Activated CD8-positive, alpha-beta T cell treated with anti-CD3 and anti-CD28 coated beads for 36 hours (primary cell): ENCODE measurements at regions of chr22 and their contacts with region 1.

Region 1: DNA sequence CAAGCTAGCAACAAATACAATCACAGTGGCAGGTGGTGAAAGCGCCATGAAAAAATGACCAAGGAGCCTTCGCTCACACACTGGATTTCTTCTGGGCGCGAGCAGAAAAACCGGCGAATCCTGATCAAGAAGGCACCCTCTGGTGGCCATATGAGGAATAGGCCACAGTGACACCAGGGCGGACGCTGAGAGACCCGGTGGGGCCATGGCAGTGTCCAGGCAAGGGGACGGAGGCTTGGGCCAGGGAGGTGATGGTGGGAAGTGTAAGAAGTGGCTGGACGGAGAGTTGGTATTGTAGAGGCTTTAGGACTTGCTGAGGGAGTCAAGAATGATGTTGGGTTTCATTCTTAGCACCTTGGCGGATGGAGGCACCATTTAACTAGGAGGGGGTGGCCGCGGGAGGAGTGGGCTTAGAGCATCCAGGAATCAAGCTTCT is 16.9 kb upstream of the RAC2 start:
- DNase-seq: peak; percentile 77
- ATAC-seq: peak; percentile 86
- H3K4me3 Mint-ChIP-seq: no peak overlapping the region
- H3K27ac Mint-ChIP-seq: peak overlapping the region; percentile 58
- H3K4me1 Mint-ChIP-seq: peaks cover 28% of the 10 kb centered on the region
- H3K27me3 Mint-ChIP-seq: no peaks in the 10 kb centered on the region
- CTCF ChIP-seq: peak; percentile 97

Region 2: DNA sequence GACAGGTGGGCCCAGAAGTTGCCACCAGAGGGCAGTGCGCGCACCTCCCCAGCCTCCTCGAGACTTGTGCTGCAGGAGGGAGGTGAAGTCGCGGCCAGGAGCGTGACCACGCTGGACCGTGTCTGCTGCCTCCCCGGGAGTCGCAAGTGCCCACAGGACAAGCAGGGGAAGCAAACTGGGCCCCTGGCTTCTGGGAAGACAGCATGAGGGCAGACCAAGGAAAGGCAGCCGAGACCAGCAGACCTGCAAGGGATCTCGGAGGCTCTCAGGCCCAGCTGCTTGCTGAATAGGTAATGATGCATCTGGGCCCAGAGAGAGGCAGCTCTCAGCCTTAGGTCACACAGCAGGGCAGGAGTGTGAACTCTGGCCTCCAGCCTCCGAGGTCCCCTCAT is 94.2 kb before region 1 on chr22:
- CTCF ChIA-PET with region 1: interaction called, 14 read pairs
- POLR2A ChIA-PET with region 1: no interaction called
- intact Hi-C with region 1: no loop called
- DNase-seq: peak; percentile 93
- ATAC-seq: peak; percentile 18
- H3K4me3 Mint-ChIP-seq: peak overlapping the region; percentile 72
- H3K27ac Mint-ChIP-seq: peak overlapping the region; percentile 73
- H3K4me1 Mint-ChIP-seq: peaks cover 93% of the 10 kb centered on the region
- H3K27me3 Mint-ChIP-seq: no peaks in the 10 kb centered on the region
- CTCF ChIP-seq: peak; percentile 87

Region 3: DNA sequence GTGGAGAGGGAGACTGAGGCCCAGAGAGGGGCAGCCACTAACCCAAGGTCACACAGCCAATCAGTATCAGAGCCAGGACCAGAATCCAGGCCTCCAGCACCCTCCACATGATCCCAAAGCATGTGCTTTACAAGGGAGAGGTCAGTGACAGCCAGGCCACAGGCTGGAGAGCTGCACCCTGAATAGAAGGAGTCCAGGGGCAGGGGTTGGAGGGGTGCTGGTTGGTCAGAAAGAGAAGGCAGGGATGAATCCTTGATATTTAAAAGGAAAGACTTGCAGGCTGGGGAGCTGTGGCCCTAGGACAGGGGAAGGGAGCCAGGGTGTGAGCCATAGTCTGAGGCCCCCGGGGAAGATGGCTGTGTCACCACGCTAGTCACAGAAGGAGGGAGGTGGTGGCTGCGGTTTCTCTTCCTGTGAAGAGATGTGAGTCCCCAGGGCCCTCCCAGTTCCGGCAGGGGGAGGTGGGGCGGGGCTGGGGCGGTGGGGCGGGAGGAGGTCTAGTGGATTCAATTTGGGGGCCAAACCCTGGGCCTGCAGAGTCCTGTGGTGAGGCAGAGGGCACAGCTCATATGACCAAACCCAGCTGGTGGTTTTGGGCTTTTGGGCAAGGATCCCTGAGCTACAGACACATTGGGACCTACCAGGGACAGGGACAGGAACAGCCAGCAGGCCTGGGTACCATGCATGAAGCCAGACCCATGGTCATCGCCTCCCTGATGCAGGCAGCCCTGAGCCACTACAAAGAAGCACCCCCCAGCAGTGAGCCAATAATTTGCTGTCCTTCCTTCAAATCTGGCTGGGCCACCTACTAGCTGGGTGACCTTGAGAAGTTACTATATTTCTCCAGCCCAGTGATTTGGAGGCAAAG is 30.9 kb before region 1 on chr22:
- CTCF ChIA-PET with region 1: interaction called, 40 read pairs
- POLR2A ChIA-PET with region 1: interaction called, 9 read pairs
- intact Hi-C with region 1: no loop called
- DNase-seq: peak; percentile 98
- ATAC-seq: peak; percentile 61
- H3K4me3 Mint-ChIP-seq: peak overlapping the region; percentile 76
- H3K27ac Mint-ChIP-seq: peak overlapping the region; percentile 98
- H3K4me1 Mint-ChIP-seq: peaks cover 85% of the 10 kb centered on the region
- H3K27me3 Mint-ChIP-seq: no peaks in the 10 kb centered on the region
- CTCF ChIP-seq: no peak

Region 4: DNA sequence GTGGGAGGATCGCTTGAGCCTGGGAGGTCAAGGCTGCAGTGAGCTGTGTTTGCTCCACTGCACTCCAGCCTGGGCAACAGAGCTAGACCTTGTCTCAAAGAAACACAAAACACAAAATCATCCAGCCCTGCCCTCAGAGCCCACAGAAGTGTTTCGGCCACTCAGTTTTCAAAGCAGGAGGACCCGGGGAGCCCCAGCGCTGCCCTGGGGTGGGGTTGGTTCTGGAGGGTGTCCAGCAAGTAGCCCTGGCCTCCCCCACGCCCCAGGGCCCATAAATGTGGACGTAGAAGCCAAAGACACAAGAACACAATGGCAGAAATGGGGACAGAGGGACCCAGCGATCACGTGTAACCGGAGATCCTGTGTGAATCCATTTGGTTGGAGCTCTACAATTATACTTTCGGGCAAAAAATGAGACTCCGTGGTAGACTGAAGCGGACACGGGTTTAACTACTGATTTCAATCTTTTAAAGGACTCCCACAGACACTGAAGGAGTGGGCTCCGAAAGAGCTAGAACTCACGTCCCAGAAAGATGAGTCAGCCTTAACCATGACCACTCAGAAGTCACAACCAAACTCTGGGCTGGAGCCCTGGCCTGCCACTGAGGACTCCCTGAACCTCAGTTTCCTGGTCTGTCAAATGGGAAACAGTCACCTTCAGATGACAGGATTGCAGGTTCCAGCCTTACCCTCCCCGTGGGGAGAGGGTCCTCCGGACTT is 12.4 kb after region 1 on chr22:
- CTCF ChIA-PET with region 1: interaction called, 73 read pairs
- POLR2A ChIA-PET with region 1: no interaction called
- intact Hi-C with region 1: no loop called
- DNase-seq: peak; percentile 51
- ATAC-seq: peak; percentile 79
- H3K4me3 Mint-ChIP-seq: no peak overlapping the region
- H3K27ac Mint-ChIP-seq: peak overlapping the region; percentile 47
- H3K4me1 Mint-ChIP-seq: peaks cover 49% of the 10 kb centered on the region
- H3K27me3 Mint-ChIP-seq: no peaks in the 10 kb centered on the region
- CTCF ChIP-seq: no peak

Region 5: DNA sequence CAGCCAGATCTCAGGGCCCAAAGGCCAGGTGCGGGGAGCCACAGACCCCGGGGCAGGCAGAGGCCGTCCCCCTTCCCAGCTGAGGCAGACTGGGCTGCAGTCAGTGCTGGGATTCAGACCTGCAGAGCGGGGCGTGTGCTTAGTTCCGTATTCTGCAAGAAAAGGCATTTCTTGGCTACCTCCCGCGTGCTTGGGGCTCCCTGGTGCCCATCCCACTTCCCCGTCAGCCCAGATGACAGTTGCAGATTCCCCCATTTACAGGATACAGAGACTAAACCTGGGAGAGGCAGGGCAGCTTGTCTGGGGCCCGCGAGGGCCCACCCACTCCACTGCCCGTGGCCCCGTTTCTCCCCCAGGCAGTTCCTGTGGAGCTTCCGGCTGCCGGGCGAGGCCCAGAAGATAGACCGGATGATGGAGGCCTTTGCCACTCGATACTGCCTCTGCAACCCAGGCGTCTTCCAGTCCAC is 39.7 kb after region 1 on chr22:
- CTCF ChIA-PET with region 1: interaction called, 18 read pairs
- POLR2A ChIA-PET with region 1: interaction called, 3 read pairs
- intact Hi-C with region 1: no loop called
- DNase-seq: peak; percentile 67
- ATAC-seq: peak; percentile 38
- H3K4me3 Mint-ChIP-seq: peak overlapping the region; percentile 63
- H3K27ac Mint-ChIP-seq: peak overlapping the region; percentile 93
- H3K4me1 Mint-ChIP-seq: peaks cover 76% of the 10 kb centered on the region
- H3K27me3 Mint-ChIP-seq: no peaks in the 10 kb centered on the region
- CTCF ChIP-seq: no peak

Region 6: GRCh38 chr22:37316875-37317371 is 56.0 kb after region 1 on chr22:
- CTCF ChIA-PET with region 1: interaction called, 40 read pairs
- POLR2A ChIA-PET with region 1: interaction called, 4 read pairs
- intact Hi-C with region 1: no loop called
- DNase-seq: peak; percentile 82
- ATAC-seq: peak; percentile 82
- H3K4me3 Mint-ChIP-seq: no peak overlapping the region
- H3K27ac Mint-ChIP-seq: no peak overlapping the region
- H3K4me1 Mint-ChIP-seq: peaks cover 42% of the 10 kb centered on the region
- H3K27me3 Mint-ChIP-seq: no peaks in the 10 kb centered on the region
- CTCF ChIP-seq: peak; percentile 95

Region 7: DNA sequence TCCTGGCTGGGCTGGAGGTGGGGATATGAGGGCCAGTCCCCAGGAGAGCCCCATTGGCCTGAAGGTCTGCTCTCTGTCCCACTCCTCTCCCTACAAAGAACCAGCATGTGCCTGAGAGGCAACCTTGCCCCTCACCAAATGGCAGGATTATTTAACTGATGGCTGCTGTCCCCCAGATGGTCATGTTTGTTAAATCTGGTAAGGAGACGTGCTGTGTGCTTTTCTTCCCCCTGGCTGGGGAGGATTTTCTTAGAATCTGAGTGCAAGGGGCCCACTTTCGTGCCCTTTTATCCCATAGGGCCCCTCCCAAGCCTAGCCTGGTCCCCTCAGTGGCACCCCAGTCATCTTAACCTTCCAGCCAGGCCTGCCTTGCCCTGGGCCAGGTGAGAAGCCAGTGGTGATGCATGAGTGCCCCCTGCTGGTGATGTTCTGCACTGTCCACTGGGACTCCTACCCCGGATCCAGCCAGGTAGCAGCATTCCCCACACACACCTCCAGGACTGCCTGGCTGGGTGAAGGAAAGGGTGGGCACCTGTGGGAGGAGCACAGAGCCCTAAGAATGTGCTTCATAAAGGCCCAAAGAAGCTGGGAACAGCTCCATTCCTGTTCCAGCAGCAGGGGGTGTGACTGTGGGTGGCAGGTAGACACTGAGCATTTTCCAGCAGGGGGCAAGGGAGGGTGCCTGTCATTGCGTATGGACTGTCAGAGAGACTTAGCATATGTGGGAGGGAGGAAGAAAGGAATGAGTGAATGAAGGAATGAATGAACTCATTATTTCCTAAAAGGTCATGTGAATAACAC is 196.4 kb after region 1 on chr22:
- CTCF ChIA-PET with region 1: interaction called, 35 read pairs
- POLR2A ChIA-PET with region 1: interaction called, 3 read pairs
- intact Hi-C with region 1: loop called (anchors 5 kb)
- DNase-seq: peak; percentile 91
- ATAC-seq: peak; percentile 99
- H3K4me3 Mint-ChIP-seq: no peak overlapping the region
- H3K27ac Mint-ChIP-seq: no peak overlapping the region
- H3K4me1 Mint-ChIP-seq: no peaks in the 10 kb centered on the region
- H3K27me3 Mint-ChIP-seq: no peaks in the 10 kb centered on the region
- CTCF ChIP-seq: peak; percentile 94